ENCODE measurements at regions of chr18 and their contacts with region 1.

Region 1: GRCh38 chr18:75209129-75209950 is at the start of gene PTGR3:
- DNase-seq: peak; percentile 66 to 91
- H3K4me3 ChIP-seq: peak within 1 kb of the TSS; percentile 92 to 93
- H3K27ac ChIP-seq: peak within 1 kb of the TSS; percentile 96 to 97
- H3K4me1 ChIP-seq: peaks cover under 1 to 35% of the 10 kb centered on the region in 2 donors
- H3K27me3 ChIP-seq: no peaks in the 10 kb centered on the region
- CTCF ChIP-seq: no peak
- total RNA-seq, gene PTGR3: 10.1 TPM

Region 2: DNA sequence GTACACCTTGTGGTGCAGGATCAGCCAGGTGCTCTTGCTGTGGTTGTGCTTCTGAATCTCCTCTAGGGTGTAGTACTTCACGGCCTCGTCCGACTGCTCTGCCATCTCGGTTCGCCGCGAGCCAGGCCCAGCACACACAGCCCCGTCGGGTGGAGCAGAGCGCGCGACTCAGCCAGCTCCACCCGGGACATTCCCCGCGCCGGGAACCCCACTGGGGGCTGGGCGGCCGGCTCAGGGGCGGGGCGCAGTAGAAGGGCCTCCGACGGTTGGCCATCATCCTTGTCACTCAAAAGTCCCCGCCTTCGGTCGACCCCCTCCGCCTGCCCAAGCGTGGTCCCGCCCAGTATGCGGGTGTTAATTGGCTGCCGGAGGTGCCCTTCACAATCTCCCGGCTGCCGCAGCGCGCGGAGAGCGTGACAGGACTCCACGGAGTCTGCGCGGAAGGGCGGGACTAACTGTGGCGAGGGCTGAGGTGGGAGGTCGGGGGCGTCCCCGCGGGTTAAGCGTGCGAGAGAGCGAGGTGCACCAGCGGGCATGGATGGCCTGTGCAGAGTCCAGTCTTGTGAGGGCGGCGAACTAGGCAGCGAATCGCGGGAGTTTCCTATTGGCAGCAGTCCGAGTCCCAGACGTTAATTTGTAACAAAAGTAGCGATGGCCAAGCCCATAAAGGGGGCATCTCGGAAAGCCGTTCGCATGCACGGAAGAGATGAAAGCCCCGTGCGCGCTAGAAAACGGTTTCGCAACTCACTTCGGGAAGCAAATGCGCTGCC is 917.4 kb before region 1 on chr18 and contains the start of gene CYB5A:
- intact Hi-C with region 1: loop called (anchors 5 kb)
- DNase-seq: peak; percentile 87 to 99
- H3K4me3 ChIP-seq: peak within 1 kb of the TSS; percentile 63 to 87
- H3K27ac ChIP-seq: peak within 1 kb of the TSS; percentile 30 to 58
- H3K4me1 ChIP-seq: peaks cover 5 to 8% of the 10 kb centered on the region in 2 donors
- H3K27me3 ChIP-seq: no peaks in the 10 kb centered on the region
- CTCF ChIP-seq: no peak
- total RNA-seq, gene CYB5A: 58.1 TPM

Region 3: GRCh38 chr18:74597662-74598349 is 611.5 kb before region 1 on chr18 and contains the start of gene ZNF407:
- intact Hi-C with region 1: loop called (anchors 2 kb)
- DNase-seq: peak; percentile 34 to 89
- H3K4me3 ChIP-seq: peak within 1 kb of the TSS; percentile 84 to 89
- H3K27ac ChIP-seq: peak within 1 kb of the TSS; percentile 99
- H3K4me1 ChIP-seq: peaks cover 0 to 17% of the 10 kb centered on the region in 2 donors
- H3K27me3 ChIP-seq: no peaks in the 10 kb centered on the region
- CTCF ChIP-seq: peak in 1 of 3 experiments; percentile 16
- total RNA-seq, gene ZNF407: 8.7 TPM

Region 4: DNA sequence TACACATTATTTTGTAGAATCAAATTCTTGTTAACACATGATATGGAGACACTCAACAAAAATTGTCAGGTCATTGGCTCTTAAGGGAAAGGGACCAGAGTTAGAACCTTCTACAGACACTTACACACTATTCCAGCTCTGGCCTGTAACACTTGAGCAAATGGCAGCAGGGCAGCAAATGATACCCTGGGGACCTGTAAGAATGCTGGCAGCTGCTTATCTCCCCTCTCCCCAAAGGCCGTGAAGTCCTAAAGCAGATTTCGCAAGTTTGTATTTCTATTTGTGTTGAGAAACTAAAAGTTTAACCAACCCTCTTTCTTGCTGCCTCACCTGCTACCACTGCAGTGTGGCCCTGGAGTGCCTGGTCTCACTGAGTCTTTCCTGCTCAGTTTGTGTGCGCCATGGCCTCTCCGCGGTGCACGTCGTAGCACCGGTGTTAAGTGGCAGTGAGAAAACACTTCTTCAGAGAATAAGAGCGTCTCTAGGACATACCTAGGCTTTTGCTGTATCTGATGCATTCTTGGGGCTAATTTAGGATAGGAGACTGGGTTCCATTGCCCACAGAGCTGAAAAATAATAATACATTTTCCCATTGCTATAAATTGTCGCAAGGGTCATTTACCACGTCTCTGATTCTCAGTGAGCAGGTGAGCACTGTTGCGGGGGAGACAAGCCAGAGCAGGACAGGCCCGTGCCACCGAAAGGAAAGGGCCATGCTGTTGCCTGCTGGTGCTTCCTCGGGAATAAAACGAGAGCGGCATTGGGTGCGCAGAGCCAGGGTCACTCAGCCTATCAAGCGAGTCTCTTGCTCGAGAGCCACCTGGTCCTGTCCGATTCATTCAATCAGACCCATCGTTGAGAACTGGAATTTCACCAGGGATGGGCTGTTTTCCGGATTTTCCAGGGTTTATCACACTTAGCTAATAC is 205.3 kb before region 1 on chr18:
- intact Hi-C with region 1: loop called (anchors 2 kb)
- DNase-seq: peak in 1 of 2 donors; percentile 70
- H3K4me3 ChIP-seq: no peak overlapping the region
- H3K27ac ChIP-seq: peak overlapping the region; percentile 37 to 51
- H3K4me1 ChIP-seq: peaks cover 0 to 22% of the 10 kb centered on the region in 2 donors
- H3K27me3 ChIP-seq: no peaks in the 10 kb centered on the region
- CTCF ChIP-seq: no peak

Region 5: DNA sequence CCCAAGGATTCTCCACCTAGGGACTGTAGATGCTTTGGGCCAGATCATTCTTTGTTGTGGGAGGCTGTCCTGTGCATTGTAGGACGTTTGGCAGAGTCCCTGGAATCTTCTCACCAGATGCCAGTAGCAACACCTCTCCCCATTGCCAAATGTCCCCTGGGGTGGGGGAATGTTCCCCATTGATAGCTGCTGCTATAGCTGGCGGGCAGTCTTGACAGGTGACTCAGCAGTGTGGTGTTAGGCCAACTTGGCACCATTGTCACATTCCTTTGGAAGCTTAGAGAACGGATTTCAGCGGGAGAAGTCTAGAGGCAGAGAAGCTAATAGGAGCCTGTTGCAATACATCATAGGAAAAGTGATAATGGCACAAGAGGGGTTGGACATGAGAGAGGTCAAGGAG is 713.8 kb after region 1 on chr18:
- intact Hi-C with region 1: loop called (anchors 10 kb)
- DNase-seq: peak; percentile 12 to 91
- H3K4me3 ChIP-seq: no peak overlapping the region
- H3K27ac ChIP-seq: no peak overlapping the region
- H3K4me1 ChIP-seq: peaks cover 0 to 6% of the 10 kb centered on the region in 2 donors
- H3K27me3 ChIP-seq: no peaks in the 10 kb centered on the region
- CTCF ChIP-seq: no peak

Region 6: GRCh38 chr18:76822510-76823160 is 1613.3 kb after region 1 on chr18 and contains the start of gene ZNF236:
- intact Hi-C with region 1: loop called (anchors 10 kb)
- DNase-seq: peak in 1 of 2 donors; percentile 84
- H3K4me3 ChIP-seq: peak within 1 kb of the TSS; percentile 78 to 93
- H3K27ac ChIP-seq: peak within 1 kb of the TSS; percentile 92 to 96
- H3K4me1 ChIP-seq: peaks cover 0 to 9% of the 10 kb centered on the region in 2 donors
- H3K27me3 ChIP-seq: no peaks in the 10 kb centered on the region
- CTCF ChIP-seq: no peak
- total RNA-seq, gene ZNF236: 9.7 TPM